ENCODE measurements at regions of chr20 and their contacts with region 1.

Region 1: GRCh38 chr20:62808211-62808865 is 3.7 kb downstream of the OGFR start:
- DNase-seq: peak; percentile 78
- ATAC-seq: peak; percentile 63
- H3K4me3 Mint-ChIP-seq: peak overlapping the region; percentile 32
- H3K27ac Mint-ChIP-seq: no peak overlapping the region
- H3K4me1 Mint-ChIP-seq: peaks cover 30% of the 10 kb centered on the region
- H3K27me3 Mint-ChIP-seq: no peaks in the 10 kb centered on the region
- CTCF ChIP-seq: peak; percentile 97

Region 2: GRCh38 chr20:62822788-62823651 is 14.7 kb after region 1 on chr20:
- CTCF ChIA-PET with region 1: interaction called, 12 read pairs
- POLR2A ChIA-PET with region 1: no interaction called
- intact Hi-C with region 1: no loop called
- DNase-seq: peak; percentile 75
- ATAC-seq: peak; percentile 81
- H3K4me3 Mint-ChIP-seq: no peak overlapping the region
- H3K27ac Mint-ChIP-seq: no peak overlapping the region
- H3K4me1 Mint-ChIP-seq: no peaks in the 10 kb centered on the region
- H3K27me3 Mint-ChIP-seq: peaks cover 4% of the 10 kb centered on the region
- CTCF ChIP-seq: peak; percentile 53

Region 3: GRCh38 chr20:62861726-62862336 is 53.5 kb after region 1 on chr20 and contains the start of gene TCFL5:
- CTCF ChIA-PET with region 1: no interaction called
- POLR2A ChIA-PET with region 1: no interaction called
- intact Hi-C with region 1: no loop called
- DNase-seq: peak; percentile 90
- ATAC-seq: peak; percentile 94
- H3K4me3 Mint-ChIP-seq: peak within 1 kb of the TSS; percentile 69
- H3K27ac Mint-ChIP-seq: no peak within 1 kb of the TSS
- H3K4me1 Mint-ChIP-seq: peaks cover 19% of the 10 kb centered on the region
- H3K27me3 Mint-ChIP-seq: no peaks in the 10 kb centered on the region
- CTCF ChIP-seq: no peak
- total RNA-seq, gene TCFL5: 7.5 to 7.6 TPM

Region 4: DNA sequence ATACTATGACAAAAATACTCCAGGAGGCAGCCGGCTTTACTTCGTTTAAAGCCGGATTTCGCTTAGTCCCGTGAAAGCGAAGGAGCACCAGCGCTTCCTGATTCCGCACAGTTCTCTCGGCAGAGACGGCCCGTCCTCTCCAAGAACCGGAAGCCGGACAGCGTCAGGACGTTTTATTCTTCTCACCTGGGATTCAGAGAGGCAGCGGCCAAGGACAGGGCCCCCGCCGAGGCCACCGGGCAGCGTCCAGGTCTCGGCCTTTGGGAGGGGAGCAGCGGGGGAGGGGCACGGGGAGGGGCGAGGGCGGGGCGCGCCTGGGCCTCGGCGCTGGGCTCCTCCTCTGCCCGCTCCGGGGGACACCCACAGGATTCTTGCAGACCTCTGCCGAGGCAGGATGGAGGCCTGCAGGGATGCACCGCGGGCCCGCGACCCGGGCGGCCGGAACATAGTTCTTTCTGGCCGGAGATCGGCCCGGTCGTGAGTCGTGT is 120.8 kb after region 1 on chr20:
- CTCF ChIA-PET with region 1: no interaction called
- POLR2A ChIA-PET with region 1: no interaction called
- intact Hi-C with region 1: no loop called
- DNase-seq: peak; percentile 56
- ATAC-seq: peak; percentile 34
- H3K4me3 Mint-ChIP-seq: peak overlapping the region; percentile 88
- H3K27ac Mint-ChIP-seq: peak overlapping the region; percentile 43
- H3K4me1 Mint-ChIP-seq: peaks cover 58% of the 10 kb centered on the region
- H3K27me3 Mint-ChIP-seq: no peaks in the 10 kb centered on the region
- CTCF ChIP-seq: no peak